ENCODE measurements at regions of chr11 and their contacts with region 1.

Region 1: GRCh38 chr11:22304337-22304961 is 33.7 kb upstream of the SLC17A6 start:
- DNase-seq: peak; percentile 18
- ATAC-seq: peak; percentile 53
- H3K4me3 ChIP-seq: no peak overlapping the region
- H3K27ac ChIP-seq: no peak overlapping the region
- H3K4me1 ChIP-seq: no peaks in the 10 kb centered on the region
- H3K27me3 ChIP-seq: 0 out of 2 replicates have a peak, but pooled peaks cover 3% of the 10 kb centered on the region
- CTCF ChIP-seq: peak; percentile 29 to 64 (median 33); a peak in 5 of 6 replicates
- POLR2A ChIP-seq: no peak
- RAD21 ChIP-seq: peak; percentile 42

Region 2: GRCh38 chr11:22169833-22170232 is 134.6 kb before region 1 on chr11:
- CTCF ChIA-PET with region 1: interaction called, 4 read pairs
- POLR2A ChIA-PET with region 1: no interaction called
- RAD21 ChIA-PET with region 1: no interaction called
- intact Hi-C with region 1: loop called (anchors 1 kb)
- DNase-seq: no peak
- ATAC-seq: no peak
- H3K4me3 ChIP-seq: no peak overlapping the region
- H3K27ac ChIP-seq: no peak overlapping the region
- H3K4me1 ChIP-seq: no peaks in the 10 kb centered on the region
- H3K27me3 ChIP-seq: peaks cover 4% of the 10 kb centered on the region; the same call in 1 of the 2 replicates
- CTCF ChIP-seq: peak in 2 of 3 experiments; percentile 19 to 50; a peak in 3 of 6 replicates
- POLR2A ChIP-seq: no peak
- RAD21 ChIP-seq: peak; percentile 33

Region 3: GRCh38 chr11:22244986-22245592 is 59.4 kb before region 1 on chr11:
- CTCF ChIA-PET with region 1: interaction called, 3 read pairs
- POLR2A ChIA-PET with region 1: no interaction called
- RAD21 ChIA-PET with region 1: no interaction called
- intact Hi-C with region 1: loop called (anchors 1 kb)
- DNase-seq: peak; percentile 15
- ATAC-seq: peak; percentile 85
- H3K4me3 ChIP-seq: no peak overlapping the region
- H3K27ac ChIP-seq: no peak overlapping the region
- H3K4me1 ChIP-seq: no peaks in the 10 kb centered on the region
- H3K27me3 ChIP-seq: no peaks in the 10 kb centered on the region
- CTCF ChIP-seq: peak; percentile 20 to 54 (median 50); a peak in 5 of 6 replicates
- POLR2A ChIP-seq: no peak
- RAD21 ChIP-seq: peak; percentile 28; the same call in 1 of the 2 replicates

Region 4: GRCh38 chr11:22337596-22338485 is 33.4 kb after region 1 on chr11 and contains the start of gene SLC17A6:
- CTCF ChIA-PET with region 1: no interaction called
- POLR2A ChIA-PET with region 1: no interaction called
- RAD21 ChIA-PET with region 1: no interaction called
- intact Hi-C with region 1: no loop called
- DNase-seq: no peak
- ATAC-seq: no peak
- H3K4me3 ChIP-seq: no peak within 1 kb of the TSS
- H3K27ac ChIP-seq: no peak within 1 kb of the TSS
- H3K4me1 ChIP-seq: no peaks in the 10 kb centered on the region
- H3K27me3 ChIP-seq: no peaks in the 10 kb centered on the region
- CTCF ChIP-seq: no peak
- POLR2A ChIP-seq: no peak
- RAD21 ChIP-seq: no peak
- total RNA-seq, gene SLC17A6: not detected